ENCODE measurements at regions of chr2 and their contacts with region 1.

Region 1: GRCh38 chr2:232300894-232301387 is 77.6 kb upstream of the ALPP start:
- DNase-seq: no peak
- ATAC-seq: peak in 1 of 2 donors; percentile 51
- H3K4me3 Mint-ChIP-seq: peak overlapping the region in 4 of 10 donors; percentile 5 to 87 (median 14)
- H3K27ac Mint-ChIP-seq: peak overlapping the region in 7 of 10 donors; percentile 38 to 88 (median 67)
- H3K4me1 Mint-ChIP-seq: peaks cover 17 to 45% (median 38%) of the 10 kb centered on the region in 4 donors
- H3K27me3 Mint-ChIP-seq: no peaks in the 10 kb centered on the region

Region 2: DNA sequence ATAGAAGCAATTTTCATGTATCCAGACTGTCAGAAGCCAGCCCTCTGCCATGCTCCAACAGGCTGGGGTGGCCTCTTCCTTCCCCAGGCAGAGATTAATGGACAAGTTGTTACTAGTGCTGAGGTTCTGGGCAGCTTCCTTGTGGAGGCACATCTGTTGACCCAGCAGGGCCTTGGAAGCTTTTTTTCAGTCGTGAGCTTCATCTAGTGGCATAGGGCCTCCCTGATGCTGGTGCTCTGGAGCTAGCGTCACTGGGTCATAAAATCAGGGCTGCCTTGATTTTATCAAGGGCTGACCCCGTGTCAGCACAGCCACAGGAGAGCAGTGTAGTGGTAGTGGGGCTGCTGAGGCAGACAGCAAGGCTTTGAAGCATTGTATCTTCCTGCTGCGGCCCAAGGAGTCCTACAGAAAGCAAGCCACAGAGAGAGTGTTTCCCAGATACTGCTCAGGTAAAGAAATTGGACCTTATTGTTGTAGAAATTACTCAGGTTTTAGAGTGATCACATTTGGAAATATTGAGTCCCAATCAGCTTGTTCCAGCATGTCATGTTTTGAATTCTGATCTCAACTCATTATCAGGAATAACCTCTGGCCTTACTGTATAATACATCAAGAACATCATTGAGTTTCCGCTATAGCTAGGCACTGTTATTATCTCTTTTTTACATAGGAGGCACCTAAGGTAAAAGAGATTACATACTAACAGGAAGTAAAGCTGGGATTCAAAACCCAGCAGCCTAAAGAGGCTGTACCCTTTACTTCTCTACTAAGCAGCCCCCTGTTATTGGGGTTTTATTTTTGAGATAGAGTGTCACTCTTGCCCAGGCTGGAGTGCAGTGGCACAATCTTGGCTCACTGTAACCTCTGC is 14.7 kb before region 1 on chr2:
- POLR2A ChIA-PET with region 1: interaction called, 46 read pairs
- DNase-seq: peak in 4 of 10 donors; percentile 3 to 28 (median 23)
- ATAC-seq: peak; percentile 72 to 76
- H3K4me3 Mint-ChIP-seq: peak overlapping the region in 9 of 10 donors; percentile 22 to 72 (median 48)
- H3K27ac Mint-ChIP-seq: peak overlapping the region; percentile 89 to 96 (median 94)
- H3K4me1 Mint-ChIP-seq: peaks cover 44 to 72% (median 59%) of the 10 kb centered on the region in 4 donors
- H3K27me3 Mint-ChIP-seq: no peaks in the 10 kb centered on the region

Region 3: GRCh38 chr2:232365621-232366321 is 64.8 kb after region 1 on chr2:
- POLR2A ChIA-PET with region 1: no interaction called
- DNase-seq: peak in 1 of 10 donors; percentile 38
- ATAC-seq: peak; percentile 62 to 75
- H3K4me3 Mint-ChIP-seq: peak overlapping the region in 2 of 10 donors; percentile 34 to 91
- H3K27ac Mint-ChIP-seq: peak overlapping the region in 5 of 10 donors; percentile 20 to 59 (median 53)
- H3K4me1 Mint-ChIP-seq: peaks cover 14 to 46% (median 34%) of the 10 kb centered on the region in 4 donors
- H3K27me3 Mint-ChIP-seq: no peaks in the 10 kb centered on the region